Activated CD4-positive, alpha-beta T cell treated with anti-CD3 and anti-CD28 coated beads for 36 hours (primary cell): ENCODE measurements at regions of chr17 and their contacts with region 1.

Region 1: GRCh38 chr17:30336369-30337171 is 2.7 kb upstream of the TMIGD1 start:
- DNase-seq: peak; percentile 80
- ATAC-seq: peak; percentile 20
- H3K4me3 Mint-ChIP-seq: no peak overlapping the region
- H3K27ac Mint-ChIP-seq: peak overlapping the region; percentile 4
- H3K4me1 Mint-ChIP-seq: peaks cover 43% of the 10 kb centered on the region
- H3K27me3 Mint-ChIP-seq: no peaks in the 10 kb centered on the region

Region 2: GRCh38 chr17:30104575-30105339 is 231.8 kb before region 1 on chr17:
- CTCF ChIA-PET with region 1: interaction called, 31 read pairs
- POLR2A ChIA-PET with region 1: no interaction called
- intact Hi-C with region 1: loop called (anchors 1 kb)
- DNase-seq: peak; percentile 81
- ATAC-seq: peak; percentile 97
- H3K4me3 Mint-ChIP-seq: peak overlapping the region; percentile 67
- H3K27ac Mint-ChIP-seq: peak overlapping the region; percentile 24
- H3K4me1 Mint-ChIP-seq: peaks cover 5% of the 10 kb centered on the region
- H3K27me3 Mint-ChIP-seq: peaks cover 2% of the 10 kb centered on the region

Region 3: DNA sequence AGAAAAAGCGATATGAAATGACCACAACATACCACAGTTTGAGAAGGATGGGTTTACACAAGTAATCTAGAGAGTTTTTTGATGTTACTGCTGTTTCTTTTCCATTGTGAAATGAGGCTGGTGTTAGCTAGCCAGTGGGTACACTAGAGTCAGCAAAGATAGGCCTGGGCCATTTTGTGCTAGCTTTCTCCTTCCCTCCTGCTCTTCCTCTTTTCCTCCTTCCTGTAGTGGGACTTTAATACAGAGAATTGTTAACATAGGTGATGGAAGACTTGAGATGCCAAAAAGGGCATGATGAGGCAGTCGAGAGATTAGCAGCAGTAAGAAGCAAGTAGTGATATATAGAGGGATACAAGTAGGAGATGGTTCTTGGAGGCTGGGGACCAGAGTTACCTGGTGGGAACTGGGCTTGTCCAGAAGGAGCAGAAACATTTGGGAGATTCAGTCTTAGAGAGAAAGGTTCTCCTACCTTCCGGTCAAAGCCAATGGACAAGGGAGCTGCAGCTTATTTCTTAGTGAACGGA is 212.2 kb before region 1 on chr17:
- CTCF ChIA-PET with region 1: interaction called, 57 read pairs
- POLR2A ChIA-PET with region 1: interaction called, 3 read pairs
- intact Hi-C with region 1: loop called (anchors 1 kb)
- DNase-seq: no peak
- ATAC-seq: no peak
- H3K4me3 Mint-ChIP-seq: no peak overlapping the region
- H3K27ac Mint-ChIP-seq: no peak overlapping the region
- H3K4me1 Mint-ChIP-seq: peaks cover 44% of the 10 kb centered on the region
- H3K27me3 Mint-ChIP-seq: no peaks in the 10 kb centered on the region

Region 4: GRCh38 chr17:30236766-30237165 is 99.8 kb before region 1 on chr17:
- CTCF ChIA-PET with region 1: interaction called, 6 read pairs
- POLR2A ChIA-PET with region 1: no interaction called
- intact Hi-C with region 1: loop called in 1 of 2 experiments (anchors 5 kb)
- DNase-seq: peak; percentile 55
- ATAC-seq: no peak
- H3K4me3 Mint-ChIP-seq: no peak overlapping the region
- H3K27ac Mint-ChIP-seq: no peak overlapping the region
- H3K4me1 Mint-ChIP-seq: peaks cover 11% of the 10 kb centered on the region
- H3K27me3 Mint-ChIP-seq: peaks cover 59% of the 10 kb centered on the region

Region 5: GRCh38 chr17:30279156-30279555 is 57.4 kb before region 1 on chr17:
- CTCF ChIA-PET with region 1: interaction called, 11 read pairs
- POLR2A ChIA-PET with region 1: no interaction called
- intact Hi-C with region 1: no loop called
- DNase-seq: no peak
- ATAC-seq: no peak
- H3K4me3 Mint-ChIP-seq: no peak overlapping the region
- H3K27ac Mint-ChIP-seq: no peak overlapping the region
- H3K4me1 Mint-ChIP-seq: no peaks in the 10 kb centered on the region
- H3K27me3 Mint-ChIP-seq: no peaks in the 10 kb centered on the region

Region 6: GRCh38 chr17:30323895-30324319 is 12.7 kb before region 1 on chr17:
- CTCF ChIA-PET with region 1: interaction called, 27 read pairs
- POLR2A ChIA-PET with region 1: no interaction called
- intact Hi-C with region 1: loop called (anchors 1 kb)
- DNase-seq: peak; percentile 72
- ATAC-seq: peak; percentile 99
- H3K4me3 Mint-ChIP-seq: no peak overlapping the region
- H3K27ac Mint-ChIP-seq: peak overlapping the region; percentile 79
- H3K4me1 Mint-ChIP-seq: peaks cover 27% of the 10 kb centered on the region
- H3K27me3 Mint-ChIP-seq: no peaks in the 10 kb centered on the region

Region 7: DNA sequence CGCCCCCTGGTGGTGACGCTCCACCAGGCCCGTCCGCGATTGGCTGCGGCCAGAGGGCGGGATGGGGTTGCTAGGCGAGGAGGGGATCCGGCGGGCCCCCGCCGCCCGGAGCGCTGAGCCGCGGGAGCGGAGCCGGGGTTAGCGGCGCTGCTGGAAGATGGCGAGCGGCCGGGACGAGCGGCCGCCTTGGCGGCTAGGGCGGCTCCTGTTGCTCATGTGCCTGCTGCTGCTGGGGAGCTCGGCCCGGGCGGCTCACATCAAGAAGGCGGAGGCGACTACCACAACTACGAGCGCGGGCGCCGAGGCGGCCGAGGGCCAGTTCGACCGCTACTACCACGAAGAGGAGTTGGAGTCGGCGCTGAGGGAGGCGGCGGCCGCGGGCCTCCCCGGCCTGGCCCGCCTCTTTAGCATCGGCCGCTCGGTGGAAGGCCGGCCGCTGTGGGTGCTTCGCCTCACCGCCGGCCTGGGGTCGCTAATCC is 42.3 kb after region 1 on chr17 and contains the start of gene CPD:
- CTCF ChIA-PET with region 1: interaction called, 15 read pairs
- POLR2A ChIA-PET with region 1: no interaction called
- intact Hi-C with region 1: loop called (anchors 1 to 2 kb)
- DNase-seq: peak; percentile 98
- ATAC-seq: peak; percentile 87
- H3K4me3 Mint-ChIP-seq: peak within 1 kb of the TSS; percentile 82
- H3K27ac Mint-ChIP-seq: peak within 1 kb of the TSS; percentile 80
- H3K4me1 Mint-ChIP-seq: peaks cover 63% of the 10 kb centered on the region
- H3K27me3 Mint-ChIP-seq: no peaks in the 10 kb centered on the region
- total RNA-seq, gene CPD: 29.0 to 36.3 TPM